ENCODE measurements at regions of chr13 and their contacts with region 1.

Region 1: DNA sequence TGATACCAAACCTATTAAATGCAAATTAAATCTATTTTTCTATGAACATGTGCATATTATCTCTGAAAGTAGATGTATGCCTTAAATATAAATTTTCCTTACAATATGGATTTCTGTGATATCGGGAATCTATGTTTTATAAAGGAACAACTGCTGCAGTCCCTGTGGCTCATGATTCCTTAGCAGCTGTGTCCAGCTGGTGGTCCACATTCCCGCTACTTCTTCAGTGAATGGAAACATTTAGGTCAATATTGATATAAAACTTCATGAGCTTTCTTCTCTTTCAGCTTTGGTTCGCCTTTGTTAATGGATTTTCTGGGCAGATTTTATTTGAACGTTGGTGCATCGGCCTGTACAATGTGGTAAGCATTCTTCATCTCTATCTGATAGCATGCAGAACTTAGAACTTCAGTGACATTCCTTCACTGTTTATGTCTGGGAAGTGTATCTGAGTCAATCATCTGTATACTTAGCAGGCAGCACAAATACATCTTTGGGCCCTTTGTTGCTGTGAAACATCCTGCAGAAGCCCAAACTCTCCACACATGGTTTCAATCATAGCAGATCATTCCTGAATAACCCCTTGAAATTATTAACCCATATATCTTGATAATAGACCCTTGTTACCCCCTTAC is 223.9 kb downstream of the SHISA2 start:
- DNase-seq: no peak
- H3K4me3 ChIP-seq: no peak overlapping the region
- H3K4me3 Mint-ChIP-seq: no peak overlapping the region
- H3K27ac ChIP-seq: no peak overlapping the region
- H3K27ac Mint-ChIP-seq: peak overlapping the region in 2 of 7 donors; percentile 20 to 23
- H3K4me1 ChIP-seq: no peaks in the 10 kb centered on the region
- H3K4me1 Mint-ChIP-seq: peaks cover 0 to 1% (median 0%) of the 10 kb centered on the region in 4 donors
- H3K27me3 ChIP-seq: no peaks in the 10 kb centered on the region
- H3K27me3 Mint-ChIP-seq: peaks cover 0 to 2% of the 10 kb centered on the region in 2 donors

Region 2: DNA sequence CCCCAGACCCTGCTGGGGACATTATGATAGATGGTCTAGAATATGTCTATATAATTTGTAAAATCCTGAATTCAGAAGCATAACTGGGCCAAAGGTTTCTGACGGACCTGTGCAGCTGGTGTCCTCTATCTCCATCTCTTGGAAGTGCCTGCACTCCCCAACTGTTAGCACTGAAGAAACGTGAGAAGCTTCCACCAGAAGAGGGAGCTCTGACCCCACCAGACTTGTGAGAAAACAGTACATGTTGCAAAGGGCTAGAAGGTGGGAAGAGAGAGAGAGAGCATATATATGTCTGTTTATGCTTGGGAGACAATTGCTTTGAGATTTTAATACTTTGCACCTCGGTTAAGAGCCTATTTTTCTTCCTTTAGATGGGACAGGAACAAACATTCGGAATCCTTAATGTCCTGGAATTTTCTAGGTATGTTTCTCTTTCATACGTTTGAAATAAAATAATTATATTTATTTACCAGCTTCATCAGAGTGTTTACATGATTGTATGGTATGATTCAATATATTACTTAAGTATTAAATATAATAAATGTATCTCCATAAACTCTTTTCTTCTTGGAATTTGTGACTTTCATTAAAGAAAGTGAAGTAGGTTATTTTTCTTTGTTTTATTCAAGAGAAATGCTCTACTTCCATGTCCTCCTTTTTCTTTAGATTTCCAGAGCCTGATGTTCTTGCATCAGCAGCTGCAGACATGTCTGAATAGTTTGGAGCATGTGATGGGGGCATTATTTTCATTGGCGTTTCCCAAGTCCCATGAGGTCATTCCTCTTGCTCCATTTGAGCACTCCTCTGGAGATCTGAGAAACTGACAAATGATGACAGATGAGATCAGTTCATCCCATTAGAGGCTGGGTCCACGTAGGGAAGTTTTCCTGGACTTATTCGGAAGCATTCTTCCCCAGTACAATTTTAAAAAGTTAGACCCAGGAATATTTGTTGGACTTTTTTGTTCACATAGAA is 253.2 kb before region 1 on chr13:
- CTCF ChIA-PET with region 1: interaction called, 7 read pairs
- POLR2A ChIA-PET with region 1: no interaction called
- intact Hi-C with region 1: loop called (anchors 1 kb)
- DNase-seq: peak; percentile 58 to 72 (median 68)
- H3K4me3 ChIP-seq: no peak overlapping the region
- H3K4me3 Mint-ChIP-seq: no peak overlapping the region
- H3K27ac ChIP-seq: no peak overlapping the region
- H3K27ac Mint-ChIP-seq: no peak overlapping the region
- H3K4me1 ChIP-seq: no peaks in the 10 kb centered on the region
- H3K4me1 Mint-ChIP-seq: peaks cover 0 to 2% (median 0%) of the 10 kb centered on the region in 4 donors
- H3K27me3 ChIP-seq: no peaks in the 10 kb centered on the region
- H3K27me3 Mint-ChIP-seq: peaks cover 20 to 37% of the 10 kb centered on the region in 2 donors

Region 3: DNA sequence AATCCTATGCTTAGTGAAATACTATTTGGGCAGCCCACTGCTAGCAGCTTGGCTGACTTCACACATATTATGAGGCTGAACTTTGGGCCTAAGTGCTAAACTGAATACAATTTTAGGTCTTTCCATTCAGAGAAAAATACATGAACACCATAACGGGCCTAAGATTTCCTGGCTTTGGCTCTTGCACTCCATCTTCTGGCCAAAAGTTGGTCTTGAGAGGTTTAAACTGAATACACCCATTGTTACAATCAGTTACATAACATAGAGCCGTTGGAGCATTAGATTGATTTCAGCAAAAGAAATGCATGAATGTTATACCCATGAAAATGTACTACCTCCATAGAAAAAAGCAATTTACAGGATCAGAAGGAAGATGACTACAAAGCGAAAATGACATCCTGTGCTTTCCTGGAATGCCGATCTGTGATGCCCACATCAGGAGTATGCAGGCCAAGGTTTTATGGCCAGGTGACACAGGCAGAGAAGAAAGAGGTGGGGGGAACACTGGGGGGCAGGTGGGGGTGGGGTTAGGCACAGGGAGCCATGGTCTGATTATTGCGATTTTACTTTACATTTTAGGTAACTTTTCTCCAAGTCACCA is 235.0 kb after region 1 on chr13:
- CTCF ChIA-PET with region 1: interaction called, 43 read pairs
- POLR2A ChIA-PET with region 1: no interaction called
- intact Hi-C with region 1: loop called (anchors 1 kb)
- DNase-seq: peak; percentile 39 to 55 (median 52)
- H3K4me3 ChIP-seq: no peak overlapping the region
- H3K4me3 Mint-ChIP-seq: no peak overlapping the region
- H3K27ac ChIP-seq: no peak overlapping the region
- H3K27ac Mint-ChIP-seq: peak overlapping the region in 1 of 7 donors; percentile 69
- H3K4me1 ChIP-seq: no peaks in the 10 kb centered on the region
- H3K4me1 Mint-ChIP-seq: peaks cover 0 to 1% (median 0%) of the 10 kb centered on the region in 4 donors
- H3K27me3 ChIP-seq: no peaks in the 10 kb centered on the region
- H3K27me3 Mint-ChIP-seq: peaks cover 0 to 12% of the 10 kb centered on the region in 2 donors

Region 4: DNA sequence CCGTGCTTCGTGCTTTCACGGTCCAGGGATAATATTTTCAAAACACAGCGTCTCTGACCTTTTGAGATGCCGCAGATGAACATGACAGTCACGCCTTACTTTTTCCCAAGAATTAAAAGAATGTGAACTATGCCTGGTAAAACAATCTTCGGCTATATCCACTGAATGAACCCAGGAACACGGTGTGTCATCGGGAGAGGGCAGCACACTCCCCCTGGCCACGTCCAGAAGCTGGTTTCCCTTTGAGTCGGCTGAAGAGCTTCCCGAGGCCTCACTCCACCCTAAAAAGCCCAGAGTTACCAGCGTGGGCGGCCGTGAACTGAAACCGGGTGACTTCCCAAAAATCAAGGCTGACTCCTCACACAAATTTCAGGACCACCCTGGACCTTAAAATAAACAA is 246.8 kb after region 1 on chr13:
- CTCF ChIA-PET with region 1: interaction called, 18 read pairs
- POLR2A ChIA-PET with region 1: no interaction called
- intact Hi-C with region 1: no loop called
- DNase-seq: no peak
- H3K4me3 ChIP-seq: no peak overlapping the region
- H3K4me3 Mint-ChIP-seq: no peak overlapping the region
- H3K27ac ChIP-seq: no peak overlapping the region
- H3K27ac Mint-ChIP-seq: no peak overlapping the region
- H3K4me1 ChIP-seq: no peaks in the 10 kb centered on the region
- H3K4me1 Mint-ChIP-seq: no peaks in the 10 kb centered on the region
- H3K27me3 ChIP-seq: no peaks in the 10 kb centered on the region
- H3K27me3 Mint-ChIP-seq: peaks cover 23 to 25% of the 10 kb centered on the region in 2 donors

Measured in CD4-positive, alpha-beta memory T cell (primary cell).